ENCODE measurements at regions of chr3 and their contacts with region 1.

Region 1: DNA sequence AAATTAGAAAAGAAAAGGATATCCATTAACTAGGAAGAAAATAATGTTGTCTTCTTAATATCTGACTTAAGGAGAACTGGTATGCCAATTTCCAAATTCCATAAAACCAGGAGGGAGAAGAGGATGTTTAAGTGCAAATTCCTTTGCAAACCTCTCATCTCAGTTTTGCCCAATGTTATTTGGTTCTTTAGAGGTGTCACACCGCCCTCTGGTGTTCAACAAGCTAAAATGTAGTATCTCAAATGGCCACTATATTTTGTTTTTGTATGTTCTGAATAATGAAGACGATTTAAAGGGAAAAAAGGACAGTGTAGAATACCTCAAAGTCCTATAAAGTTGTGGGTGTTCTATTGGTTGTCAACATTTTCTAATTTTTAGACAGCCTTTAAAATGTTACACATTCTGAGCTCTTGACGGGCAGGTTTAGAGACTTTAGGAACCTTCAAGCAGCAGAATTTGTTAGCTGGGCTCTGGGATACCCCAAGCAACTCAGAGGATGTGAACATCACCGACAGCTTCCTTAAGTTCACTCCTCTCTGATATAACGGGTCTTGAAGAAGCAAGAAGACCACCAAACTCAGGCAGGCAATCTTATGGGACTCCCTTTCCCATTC is 458.3 kb downstream of the MFSD1 start:
- DNase-seq: no peak
- H3K4me3 ChIP-seq: no peak overlapping the region
- H3K27ac ChIP-seq: no peak overlapping the region
- H3K4me1 ChIP-seq: no peaks in the 10 kb centered on the region
- H3K27me3 ChIP-seq: no peaks in the 10 kb centered on the region
- CTCF ChIP-seq: peak; percentile 66 to 84 (median 67)
- POLR2A ChIP-seq: no peak

Region 2: GRCh38 chr3:158568784-158569183 is 691.4 kb before region 1 on chr3:
- intact Hi-C with region 1: no loop called
- DNase-seq: no peak
- H3K4me3 ChIP-seq: no peak overlapping the region
- H3K27ac ChIP-seq: no peak overlapping the region
- H3K4me1 ChIP-seq: peaks cover 9% of the 10 kb centered on the region
- H3K27me3 ChIP-seq: no peaks in the 10 kb centered on the region
- CTCF ChIP-seq: no peak
- POLR2A ChIP-seq: no peak

Region 3: GRCh38 chr3:158842976-158843375 is 417.2 kb before region 1 on chr3:
- intact Hi-C with region 1: loop called (anchors 5 kb)
- DNase-seq: no peak
- H3K4me3 ChIP-seq: no peak overlapping the region
- H3K27ac ChIP-seq: no peak overlapping the region
- H3K4me1 ChIP-seq: no peaks in the 10 kb centered on the region
- H3K27me3 ChIP-seq: no peaks in the 10 kb centered on the region
- CTCF ChIP-seq: no peak
- POLR2A ChIP-seq: no peak

Region 4: GRCh38 chr3:159804726-159805410 is 544.7 kb after region 1 on chr3:
- intact Hi-C with region 1: loop called (anchors 10 kb)
- DNase-seq: no peak
- H3K4me3 ChIP-seq: no peak overlapping the region
- H3K27ac ChIP-seq: no peak overlapping the region
- H3K4me1 ChIP-seq: peaks cover 29% of the 10 kb centered on the region
- H3K27me3 ChIP-seq: no peaks in the 10 kb centered on the region
- CTCF ChIP-seq: peak; percentile 47 to 74 (median 66)
- POLR2A ChIP-seq: no peak

Region 5: DNA sequence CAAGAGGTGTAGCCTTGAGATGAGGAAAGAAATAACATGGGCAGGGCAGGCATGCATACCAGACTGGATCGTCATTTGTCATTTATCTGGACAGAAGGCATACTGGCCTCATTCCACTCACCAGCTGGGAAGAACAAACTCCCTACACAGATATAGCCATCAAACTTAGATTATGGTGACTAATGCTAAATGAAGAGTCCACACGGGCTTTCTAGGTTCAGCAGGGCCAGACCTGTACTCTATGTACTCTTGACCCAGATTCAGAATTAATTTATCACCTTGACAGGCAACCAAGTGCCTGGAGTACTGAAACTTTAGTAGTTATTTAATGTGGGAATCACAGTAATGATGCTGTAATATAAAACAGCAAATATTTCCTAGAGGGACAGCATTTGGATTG is 564.2 kb after region 1 on chr3:
- intact Hi-C with region 1: loop called (anchors 5 kb)
- DNase-seq: no peak
- H3K4me3 ChIP-seq: no peak overlapping the region
- H3K27ac ChIP-seq: no peak overlapping the region
- H3K4me1 ChIP-seq: peaks cover 21% of the 10 kb centered on the region
- H3K27me3 ChIP-seq: no peaks in the 10 kb centered on the region
- CTCF ChIP-seq: no peak
- POLR2A ChIP-seq: no peak